CD4-positive, alpha-beta memory T cell (primary cell): ENCODE measurements at regions of chr19 and their contacts with region 1.

Region 1: DNA sequence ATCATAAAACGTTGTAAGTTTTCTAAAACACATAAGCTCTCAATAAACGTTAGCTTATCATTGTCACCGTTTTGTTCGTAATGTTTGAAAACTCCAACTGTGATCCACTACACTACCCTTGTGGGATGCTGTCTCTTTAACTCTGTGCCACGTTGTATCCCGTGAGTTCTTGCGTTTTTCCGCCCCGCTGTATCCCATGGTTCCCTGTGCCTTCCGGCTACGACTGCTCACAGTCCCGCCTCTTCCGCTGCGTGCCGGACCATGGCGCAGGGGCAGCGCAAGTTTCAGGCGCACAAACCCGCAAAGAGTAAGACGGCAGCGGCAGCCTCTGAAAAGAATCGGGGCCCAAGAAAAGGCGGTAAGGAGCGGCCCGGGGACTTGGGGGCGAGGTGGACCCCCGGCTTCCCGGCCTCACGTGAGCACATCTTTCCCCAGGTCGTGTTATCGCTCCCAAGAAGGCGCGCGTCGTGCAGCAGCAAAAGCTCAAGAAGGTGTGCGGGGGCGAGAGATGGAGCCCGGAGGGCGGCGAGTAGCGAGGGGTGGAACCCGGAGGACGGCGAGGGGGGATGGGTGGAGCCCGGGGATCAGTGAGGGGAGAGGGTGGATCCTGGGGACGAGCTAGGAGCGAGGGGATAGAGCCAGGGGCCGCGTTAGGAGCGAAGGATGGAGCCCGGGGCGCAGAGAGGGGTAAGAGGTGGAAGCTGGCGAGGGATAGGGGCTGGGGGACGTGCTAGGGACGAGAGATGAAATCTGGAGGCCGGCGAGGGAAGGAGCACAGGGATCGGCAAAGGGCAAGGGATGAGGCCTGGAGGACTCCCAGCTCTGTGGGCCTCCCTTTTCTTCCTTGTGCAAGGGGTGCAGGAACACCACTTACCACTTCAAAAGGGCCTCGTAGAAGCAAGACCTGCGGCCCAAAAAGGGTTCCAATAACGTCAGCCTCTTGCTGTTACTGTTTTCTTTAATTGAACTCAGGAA is at the start of gene C19orf53:
- DNase-seq: peak; percentile 84 to 92 (median 87)
- H3K4me3 ChIP-seq: peak within 1 kb of the TSS; percentile 87 to 90
- H3K4me3 Mint-ChIP-seq: peak within 1 kb of the TSS; percentile 96 to 100 (median 100)
- H3K27ac ChIP-seq: peak within 1 kb of the TSS; percentile 84
- H3K27ac Mint-ChIP-seq: peak within 1 kb of the TSS; percentile 92 to 100 (median 98)
- H3K4me1 ChIP-seq: peaks cover 23% of the 10 kb centered on the region
- H3K4me1 Mint-ChIP-seq: peaks cover 12 to 36% (median 25%) of the 10 kb centered on the region in 4 donors
- H3K27me3 ChIP-seq: no peaks in the 10 kb centered on the region
- H3K27me3 Mint-ChIP-seq: no peaks in the 10 kb centered on the region
- total RNA-seq, gene C19orf53: 84.3 to 85.0 TPM

Region 2: DNA sequence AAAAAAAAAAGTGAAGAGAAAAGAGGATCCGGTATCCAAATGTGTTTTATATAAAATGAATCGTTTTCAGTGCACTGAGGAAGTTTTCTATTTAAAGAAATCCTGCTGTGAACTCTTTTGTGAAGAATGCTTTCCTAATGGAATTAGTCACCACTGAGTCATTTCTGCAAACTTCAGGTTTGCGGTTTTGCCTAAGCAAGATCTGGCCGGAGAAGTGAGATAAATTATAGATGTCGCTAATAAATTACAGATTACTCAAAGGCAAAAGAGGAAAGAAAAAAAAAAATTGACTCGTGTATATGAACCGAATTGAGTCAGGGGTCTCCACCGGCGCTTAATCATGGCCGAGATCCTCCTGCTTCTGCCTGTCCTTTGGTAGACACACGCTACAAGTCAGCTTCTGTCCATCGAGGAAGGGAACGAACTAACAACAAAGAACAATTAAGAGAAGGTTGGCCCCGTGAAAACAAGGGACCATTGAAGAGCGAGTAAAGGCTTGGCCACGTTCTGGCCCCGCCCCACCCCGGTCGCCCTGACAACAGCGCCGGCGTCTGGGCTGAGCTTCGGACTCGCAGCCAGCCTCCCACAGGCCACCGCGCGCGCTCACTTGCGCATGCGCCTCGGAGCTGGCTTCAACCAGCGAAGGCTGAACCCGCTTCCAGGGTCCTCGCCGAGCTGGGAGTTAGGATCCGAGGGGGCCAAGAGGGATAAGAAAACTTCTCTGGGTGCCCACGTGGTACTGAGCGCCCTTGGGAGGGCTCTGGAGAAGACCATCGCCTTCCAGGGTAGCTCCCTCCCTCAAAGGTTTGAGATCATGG is 43.1 kb before region 1 on chr19:
- CTCF ChIA-PET with region 1: interaction called, 3 read pairs
- POLR2A ChIA-PET with region 1: interaction called, 19 read pairs
- intact Hi-C with region 1: no loop called
- DNase-seq: peak; percentile 92 to 93 (median 92)
- H3K4me3 ChIP-seq: peak overlapping the region; percentile 79 to 87
- H3K4me3 Mint-ChIP-seq: peak overlapping the region; percentile 89 to 97 (median 92)
- H3K27ac ChIP-seq: peak overlapping the region; percentile 59
- H3K27ac Mint-ChIP-seq: peak overlapping the region; percentile 73 to 97 (median 94)
- H3K4me1 ChIP-seq: peaks cover 19% of the 10 kb centered on the region
- H3K4me1 Mint-ChIP-seq: peaks cover 6 to 19% (median 10%) of the 10 kb centered on the region in 4 donors
- H3K27me3 ChIP-seq: no peaks in the 10 kb centered on the region
- H3K27me3 Mint-ChIP-seq: no peaks in the 10 kb centered on the region

Region 3: DNA sequence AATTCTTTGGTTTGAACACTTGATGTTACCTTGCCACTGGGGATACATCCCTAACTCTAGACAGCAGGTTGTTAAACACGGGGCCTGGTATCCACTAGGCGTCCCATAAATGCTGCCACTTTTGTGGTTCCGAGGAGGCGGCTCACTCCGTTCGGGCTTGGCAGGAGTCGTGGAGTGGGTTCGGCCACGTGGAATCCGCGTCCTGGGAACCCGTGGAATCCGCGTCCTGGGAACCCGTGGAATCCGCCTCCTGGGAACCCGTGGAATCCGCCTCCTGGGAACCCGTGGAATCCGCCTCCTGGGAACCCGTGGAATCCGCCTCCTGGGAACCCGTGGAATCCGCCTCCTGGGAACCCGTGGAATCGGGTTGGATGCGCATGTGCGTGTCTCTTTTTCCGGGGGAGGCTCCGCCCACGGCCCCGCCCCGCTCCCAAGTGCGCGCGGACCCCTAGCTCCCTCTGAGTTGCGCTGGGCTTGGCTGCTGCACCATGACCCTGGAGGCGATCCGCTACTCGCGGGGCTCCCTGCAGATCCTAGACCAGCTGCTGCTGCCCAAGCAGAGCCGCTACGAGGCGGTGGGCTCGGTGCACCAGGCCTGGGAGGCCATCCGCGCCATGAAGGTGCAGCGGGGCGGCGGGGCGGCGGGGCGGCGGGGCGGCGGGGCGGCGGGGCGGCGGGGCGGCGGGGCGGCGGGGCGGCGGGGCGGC is 10.2 kb before region 1 on chr19 and contains the start of gene MRI1:
- CTCF ChIA-PET with region 1: no interaction called
- POLR2A ChIA-PET with region 1: interaction called, 23 read pairs
- intact Hi-C with region 1: no loop called
- DNase-seq: peak in 4 of 5 donors; percentile 44 to 57 (median 52)
- H3K4me3 ChIP-seq: peak within 1 kb of the TSS; percentile 42 to 60
- H3K4me3 Mint-ChIP-seq: peak within 1 kb of the TSS; percentile 83 to 91 (median 90)
- H3K27ac ChIP-seq: peak within 1 kb of the TSS; percentile 70
- H3K27ac Mint-ChIP-seq: peak within 1 kb of the TSS; percentile 58 to 95 (median 93)
- H3K4me1 ChIP-seq: peaks cover 16% of the 10 kb centered on the region
- H3K4me1 Mint-ChIP-seq: peaks cover 13 to 27% (median 18%) of the 10 kb centered on the region in 4 donors
- H3K27me3 ChIP-seq: no peaks in the 10 kb centered on the region
- H3K27me3 Mint-ChIP-seq: no peaks in the 10 kb centered on the region
- total RNA-seq, gene MRI1: 46.4 to 52.3 TPM

Region 4: DNA sequence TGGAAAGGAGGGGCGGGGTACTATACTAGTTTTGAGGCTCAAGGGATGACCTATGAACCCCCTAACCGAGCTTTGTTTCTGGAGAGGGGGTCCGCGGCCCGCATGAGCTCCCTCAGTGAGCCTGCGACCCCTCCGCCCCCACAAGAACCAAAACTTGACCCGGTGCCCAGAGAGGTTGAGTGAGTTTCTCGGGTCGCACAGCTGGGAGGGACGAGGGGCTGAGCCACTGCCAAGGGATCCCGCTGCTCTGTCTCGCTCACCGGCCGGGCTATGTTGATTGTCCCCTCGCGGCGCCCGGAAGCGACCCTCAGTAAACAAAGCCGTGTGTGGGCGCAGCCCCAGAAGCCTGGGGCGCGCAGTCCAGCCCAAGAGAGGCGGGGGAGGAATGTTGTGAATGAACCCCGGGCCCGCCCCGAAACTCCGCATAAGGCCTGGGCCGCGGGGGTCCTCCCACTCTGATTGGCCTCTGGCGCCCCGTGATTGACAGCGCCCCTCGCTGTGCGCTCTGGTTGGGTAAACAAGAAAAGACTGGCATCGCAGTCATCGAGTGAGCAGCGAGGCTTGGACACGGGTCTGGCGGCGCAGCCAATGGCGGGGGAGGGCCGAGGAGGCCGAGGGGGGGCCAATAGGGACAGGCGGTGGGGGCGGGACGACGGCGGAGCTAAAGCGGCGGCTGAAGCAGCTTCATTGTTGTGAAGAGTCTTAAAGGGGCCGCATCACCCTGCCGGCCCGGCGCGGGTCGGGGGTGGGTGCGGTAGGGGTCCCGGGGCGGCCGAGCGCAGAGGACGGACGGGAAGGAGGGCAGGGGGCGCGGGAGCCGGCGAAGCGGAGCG is 20.5 kb after region 1 on chr19 and contains the start of gene ZSWIM4:
- CTCF ChIA-PET with region 1: interaction called, 4 read pairs
- POLR2A ChIA-PET with region 1: interaction called, 48 read pairs
- intact Hi-C with region 1: loop called (anchors 1 kb)
- DNase-seq: peak; percentile 81 to 85 (median 82)
- H3K4me3 ChIP-seq: peak within 1 kb of the TSS; percentile 61 to 66
- H3K4me3 Mint-ChIP-seq: peak within 1 kb of the TSS; percentile 91 to 97 (median 96)
- H3K27ac ChIP-seq: peak within 1 kb of the TSS; percentile 53
- H3K27ac Mint-ChIP-seq: peak within 1 kb of the TSS; percentile 92 to 98 (median 95)
- H3K4me1 ChIP-seq: peaks cover 23% of the 10 kb centered on the region
- H3K4me1 Mint-ChIP-seq: peaks cover 21 to 39% (median 31%) of the 10 kb centered on the region in 4 donors
- H3K27me3 ChIP-seq: no peaks in the 10 kb centered on the region
- H3K27me3 Mint-ChIP-seq: no peaks in the 10 kb centered on the region
- total RNA-seq, gene ZSWIM4: 6.4 to 6.6 TPM

Region 5: DNA sequence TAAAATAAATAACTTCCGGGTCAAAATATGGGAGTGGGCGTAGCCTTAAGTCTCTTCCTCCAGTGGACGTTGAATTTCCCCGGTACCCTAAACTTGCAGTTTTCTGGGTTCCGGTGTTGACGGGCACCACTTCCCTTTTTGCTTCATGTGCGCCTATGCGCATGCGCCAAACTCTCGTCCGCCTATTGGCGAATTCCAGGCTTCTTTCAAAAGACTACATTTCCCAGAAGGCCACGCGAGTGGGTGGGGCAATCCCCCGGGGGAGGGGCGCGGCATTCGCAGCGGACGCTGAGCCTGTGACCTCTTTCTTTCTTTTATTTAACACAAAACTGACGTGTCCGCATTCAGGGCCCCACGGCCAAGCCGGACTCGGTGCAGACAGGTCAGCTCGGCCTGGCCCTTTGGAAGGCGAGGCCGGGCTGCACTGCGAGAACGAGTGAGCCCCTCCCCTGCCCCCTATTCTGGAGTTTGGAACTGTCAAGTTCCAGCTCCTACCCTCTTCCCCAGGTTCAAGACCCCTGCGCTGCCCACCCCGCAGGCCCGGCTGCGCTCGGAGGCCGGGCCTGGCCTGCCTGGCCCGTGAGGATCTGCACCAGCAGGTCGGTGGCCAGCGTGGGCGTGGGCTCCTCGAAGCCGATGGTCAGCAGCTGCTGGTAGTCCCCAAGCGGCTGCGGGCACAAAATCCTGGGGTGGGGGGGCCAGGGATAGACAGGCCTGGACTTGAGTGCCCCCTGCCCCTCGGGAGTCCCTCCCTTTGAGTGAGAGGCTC is 307.0 kb after region 1 on chr19:
- CTCF ChIA-PET with region 1: interaction called, 3 read pairs
- POLR2A ChIA-PET with region 1: interaction called, 5 read pairs
- intact Hi-C with region 1: loop called (anchors 1 kb)
- DNase-seq: peak; percentile 98 to 99 (median 99)
- H3K4me3 ChIP-seq: peak overlapping the region; percentile 61 to 74
- H3K4me3 Mint-ChIP-seq: peak overlapping the region; percentile 87 to 97 (median 92)
- H3K27ac ChIP-seq: peak overlapping the region; percentile 68
- H3K27ac Mint-ChIP-seq: peak overlapping the region; percentile 84 to 98 (median 95)
- H3K4me1 ChIP-seq: peaks cover 18% of the 10 kb centered on the region
- H3K4me1 Mint-ChIP-seq: peaks cover 5 to 28% (median 17%) of the 10 kb centered on the region in 4 donors
- H3K27me3 ChIP-seq: no peaks in the 10 kb centered on the region
- H3K27me3 Mint-ChIP-seq: no peaks in the 10 kb centered on the region